ENCODE measurements at regions of chr7 and their contacts with region 1.

Region 1: DNA sequence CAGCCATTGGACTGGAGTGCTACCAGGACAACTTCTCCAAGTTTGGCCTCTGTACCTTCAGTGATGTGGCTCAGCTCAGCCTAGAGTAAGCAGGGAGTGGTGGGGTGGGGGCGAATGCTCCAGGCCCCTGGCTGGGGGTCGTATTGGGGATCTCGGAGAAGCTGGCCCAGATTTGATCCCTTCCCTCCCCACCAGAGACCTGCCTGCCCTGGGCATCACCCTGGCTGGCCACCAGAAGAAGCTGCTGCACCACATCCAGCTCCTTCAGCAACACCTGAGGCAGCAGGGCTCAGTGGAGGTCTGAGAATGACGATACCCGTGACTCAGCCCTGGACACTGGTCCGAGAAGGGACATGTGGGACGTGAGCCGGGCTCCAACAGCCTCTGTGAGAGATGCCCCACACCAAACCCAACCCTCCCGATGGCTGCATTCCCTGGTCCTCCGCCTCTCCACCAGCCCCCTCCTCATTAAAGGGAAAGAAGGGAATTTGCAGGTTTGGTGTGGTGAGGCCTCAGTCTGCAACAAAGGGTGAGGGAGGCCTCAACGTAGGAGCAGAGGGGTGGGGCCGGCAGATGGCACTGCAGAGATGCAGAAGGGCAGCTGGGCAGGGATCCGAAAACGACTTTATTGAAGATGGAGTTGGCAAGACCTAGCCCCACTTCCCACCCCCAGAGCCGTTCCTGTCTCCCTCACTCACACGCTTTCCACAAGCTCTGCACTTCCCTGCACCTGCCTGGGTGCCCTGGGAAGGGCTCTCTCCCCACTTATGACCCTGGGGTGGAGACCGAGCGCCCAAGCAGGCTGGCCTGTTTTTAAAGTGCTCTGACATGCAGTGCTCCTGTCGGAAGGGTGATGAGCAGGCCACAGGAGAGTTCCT is 14.7 kb downstream of the TRPV6 start:
- DNase-seq: peak in 1 of 2 donors; percentile 66
- ATAC-seq: no peak
- H3K4me3 ChIP-seq: no peak overlapping the region
- H3K27ac ChIP-seq: no peak overlapping the region
- H3K4me1 ChIP-seq: no peaks in the 10 kb centered on the region
- H3K27me3 ChIP-seq: no peaks in the 10 kb centered on the region

Region 2: DNA sequence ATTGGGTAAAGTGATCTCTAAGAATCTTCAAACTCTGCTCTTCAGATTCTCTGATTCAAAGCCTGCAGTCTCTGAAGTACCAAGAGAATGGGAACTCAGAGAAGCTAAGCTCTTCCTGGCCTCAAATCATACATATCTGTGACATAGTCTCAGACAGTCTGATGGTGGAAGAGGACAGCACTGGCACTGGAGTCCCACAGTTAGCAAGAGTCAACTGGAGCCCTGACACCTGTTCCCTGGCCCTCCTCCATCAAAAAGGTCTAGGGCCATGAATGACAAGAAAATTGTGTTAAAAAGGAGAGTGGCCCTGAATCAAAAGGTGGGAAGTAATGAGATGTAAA is 62.4 kb before region 1 on chr7:
- intact Hi-C with region 1: no loop called
- DNase-seq: no peak
- ATAC-seq: no peak
- H3K4me3 ChIP-seq: no peak overlapping the region
- H3K27ac ChIP-seq: no peak overlapping the region
- H3K4me1 ChIP-seq: no peaks in the 10 kb centered on the region
- H3K27me3 ChIP-seq: no peaks in the 10 kb centered on the region

Region 3: DNA sequence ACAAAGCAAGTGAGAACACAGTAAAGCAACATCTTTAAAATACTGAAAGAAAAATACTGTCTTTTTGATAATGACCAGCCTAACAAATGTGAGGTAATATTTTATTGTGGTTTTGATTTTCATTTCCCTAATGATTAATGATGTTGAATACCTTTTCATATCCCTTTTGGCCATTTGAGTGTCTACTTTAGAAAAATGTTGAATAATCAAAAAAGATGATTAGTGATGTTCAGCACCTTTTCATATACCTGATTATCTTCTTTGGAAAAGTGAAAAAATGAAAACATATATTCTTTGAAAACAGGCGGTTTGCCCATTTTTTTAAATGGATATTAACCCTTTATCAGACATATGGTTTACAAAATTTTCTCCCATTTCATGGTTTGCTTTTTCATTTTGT is 48.1 kb before region 1 on chr7:
- intact Hi-C with region 1: loop called in 1 of 2 experiments (anchors 2 kb)
- DNase-seq: no peak
- ATAC-seq: no peak
- H3K4me3 ChIP-seq: no peak overlapping the region
- H3K27ac ChIP-seq: no peak overlapping the region
- H3K4me1 ChIP-seq: no peaks in the 10 kb centered on the region
- H3K27me3 ChIP-seq: no peaks in the 10 kb centered on the region

Region 4: DNA sequence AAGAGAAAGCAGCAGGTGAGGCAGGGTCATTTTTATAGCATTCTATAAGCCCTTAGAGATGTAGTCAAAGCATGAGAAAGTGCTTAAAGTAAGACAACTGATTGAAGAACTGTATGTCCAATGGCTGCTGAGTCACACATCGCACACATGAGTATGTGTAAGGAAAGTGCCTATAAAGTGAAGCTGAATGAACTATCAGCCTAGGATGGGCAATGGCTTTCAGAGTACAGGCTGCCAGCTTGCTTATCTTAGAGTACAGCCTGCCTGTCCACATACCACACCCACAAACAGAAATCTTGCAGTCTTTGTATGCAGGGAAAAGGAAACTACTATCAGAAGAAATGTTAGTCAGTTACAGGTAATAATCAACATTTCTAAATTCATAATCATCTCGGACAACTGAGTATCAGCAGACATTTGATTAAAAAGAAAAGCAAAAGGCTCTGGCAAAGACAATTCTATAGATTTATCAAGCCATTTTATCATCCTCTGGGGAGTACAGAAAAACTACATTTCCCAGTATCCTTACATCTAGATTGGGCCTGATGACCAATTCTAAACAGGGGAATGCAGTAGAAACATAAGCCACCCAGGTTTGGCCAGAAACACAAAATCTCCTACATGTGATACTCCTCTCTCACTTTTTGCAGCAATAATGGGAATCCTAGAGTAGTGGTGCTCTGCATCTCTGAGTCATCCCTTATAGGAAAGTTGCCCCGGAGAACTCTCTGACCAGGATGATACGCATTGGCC is 32.2 kb before region 1 on chr7:
- intact Hi-C with region 1: no loop called
- DNase-seq: no peak
- ATAC-seq: no peak
- H3K4me3 ChIP-seq: no peak overlapping the region
- H3K27ac ChIP-seq: no peak overlapping the region
- H3K4me1 ChIP-seq: no peaks in the 10 kb centered on the region
- H3K27me3 ChIP-seq: no peaks in the 10 kb centered on the region